ENCODE measurements at regions of chr2 and their contacts with region 1.

Region 1: GRCh38 chr2:64523666-64524603 is at the start of gene AFTPH:
- DNase-seq: peak; percentile 99
- ATAC-seq: peak; percentile 89
- H3K4me3 ChIP-seq: peak within 1 kb of the TSS; percentile 74 to 99 (median 97)
- H3K4me3 Mint-ChIP-seq: peak within 1 kb of the TSS; percentile 98
- H3K27ac ChIP-seq: peak within 1 kb of the TSS; percentile 92 to 97
- H3K27ac Mint-ChIP-seq: peak within 1 kb of the TSS; percentile 100
- H3K4me1 ChIP-seq: peaks cover 34 to 36% of the 10 kb centered on the region in 2 donors
- H3K4me1 Mint-ChIP-seq: peaks cover 45% of the 10 kb centered on the region
- H3K27me3 ChIP-seq: no peaks in the 10 kb centered on the region
- H3K27me3 Mint-ChIP-seq: no peaks in the 10 kb centered on the region
- CTCF ChIP-seq: no peak
- total RNA-seq, gene AFTPH: 91.6 and 94.1 TPM in 2 replicates

Region 2: DNA sequence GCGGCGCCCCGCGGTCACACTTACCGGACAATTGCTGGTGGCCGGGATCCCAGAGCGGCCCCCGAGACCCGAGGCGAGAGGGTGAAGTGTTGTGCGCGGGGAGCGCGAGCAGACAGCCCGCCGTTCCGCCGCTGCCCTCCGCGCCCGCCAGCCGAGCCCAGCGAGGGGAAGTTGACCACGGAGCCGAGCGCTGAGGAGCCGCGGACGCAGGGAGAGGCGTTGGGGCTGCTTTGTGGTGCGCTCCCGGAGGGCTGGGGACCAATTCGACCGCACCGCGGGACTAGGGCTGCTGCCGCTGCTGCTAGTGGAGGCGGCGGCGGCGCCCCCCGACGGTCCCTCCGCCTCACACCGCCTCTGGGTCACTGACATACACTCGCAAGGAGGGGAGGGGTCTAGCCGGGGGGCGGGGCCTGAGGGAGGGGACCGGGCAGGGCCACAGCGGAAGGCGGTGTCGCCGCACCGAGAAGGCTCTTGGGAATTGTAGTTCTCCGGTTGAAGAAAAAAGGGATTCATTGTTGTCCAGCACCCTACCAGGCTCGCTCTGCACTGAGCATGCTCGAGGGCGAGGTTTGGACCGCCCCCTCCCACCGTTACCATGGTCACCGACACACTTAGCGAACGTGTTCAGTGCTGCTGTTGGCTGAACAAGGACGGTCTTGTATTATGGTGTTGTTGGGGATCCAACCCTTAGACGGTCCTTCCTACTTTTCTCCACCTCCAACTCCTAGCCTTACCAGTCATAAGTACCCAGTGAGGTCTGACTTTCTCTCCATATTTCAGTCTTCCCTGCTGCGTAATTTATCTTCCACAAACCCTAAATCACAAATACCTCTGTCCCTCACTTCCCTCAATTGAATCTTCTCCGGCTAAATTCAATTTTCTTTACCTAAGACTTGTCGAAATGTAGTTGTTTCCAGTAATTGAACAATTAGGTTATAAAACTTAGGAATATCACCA is 379.6 kb before region 1 on chr2 and contains the start of gene PELI1:
- CTCF ChIA-PET with region 1: interaction called, 3 read pairs
- POLR2A ChIA-PET with region 1: no interaction called
- intact Hi-C with region 1: loop called (anchors 2 kb)
- DNase-seq: peak; percentile 95
- ATAC-seq: peak; percentile 95
- H3K4me3 ChIP-seq: peak within 1 kb of the TSS; percentile 77 to 98 (median 85)
- H3K4me3 Mint-ChIP-seq: peak within 1 kb of the TSS; percentile 92
- H3K27ac ChIP-seq: peak within 1 kb of the TSS; percentile 81 to 86
- H3K27ac Mint-ChIP-seq: peak within 1 kb of the TSS; percentile 94
- H3K4me1 ChIP-seq: peaks cover 22 to 32% of the 10 kb centered on the region in 2 donors
- H3K4me1 Mint-ChIP-seq: peaks cover 38% of the 10 kb centered on the region
- H3K27me3 ChIP-seq: no peaks in the 10 kb centered on the region
- H3K27me3 Mint-ChIP-seq: no peaks in the 10 kb centered on the region
- CTCF ChIP-seq: peak; percentile 10
- total RNA-seq, gene PELI1: 115 and 117 TPM in 2 replicates

Region 3: GRCh38 chr2:64562148-64562784 is 38.3 kb after region 1 on chr2:
- CTCF ChIA-PET with region 1: interaction called, 217 read pairs
- POLR2A ChIA-PET with region 1: no interaction called
- intact Hi-C with region 1: loop called (anchors 1 kb)
- DNase-seq: peak; percentile 67
- ATAC-seq: peak; percentile 51
- H3K4me3 ChIP-seq: no peak overlapping the region
- H3K4me3 Mint-ChIP-seq: no peak overlapping the region
- H3K27ac ChIP-seq: no peak overlapping the region
- H3K27ac Mint-ChIP-seq: peak overlapping the region; percentile 38
- H3K4me1 ChIP-seq: peaks cover 5 to 7% of the 10 kb centered on the region in 2 donors
- H3K4me1 Mint-ChIP-seq: peaks cover 39% of the 10 kb centered on the region
- H3K27me3 ChIP-seq: no peaks in the 10 kb centered on the region
- H3K27me3 Mint-ChIP-seq: no peaks in the 10 kb centered on the region
- CTCF ChIP-seq: peak; percentile 76

Region 4: GRCh38 chr2:64730551-64731262 is 206.8 kb after region 1 on chr2:
- CTCF ChIA-PET with region 1: interaction called, 3 read pairs
- POLR2A ChIA-PET with region 1: interaction called, 3 read pairs
- intact Hi-C with region 1: loop called (anchors 1 kb)
- DNase-seq: peak; percentile 70
- ATAC-seq: peak; percentile 47
- H3K4me3 ChIP-seq: peak overlapping the region; percentile 43 to 81 (median 61)
- H3K4me3 Mint-ChIP-seq: peak overlapping the region; percentile 87
- H3K27ac ChIP-seq: peak overlapping the region; percentile 84
- H3K27ac Mint-ChIP-seq: peak overlapping the region; percentile 97
- H3K4me1 ChIP-seq: peaks cover 50% of the 10 kb centered on the region in 2 donors
- H3K4me1 Mint-ChIP-seq: peaks cover 57% of the 10 kb centered on the region
- H3K27me3 ChIP-seq: no peaks in the 10 kb centered on the region
- H3K27me3 Mint-ChIP-seq: no peaks in the 10 kb centered on the region
- CTCF ChIP-seq: no peak

Region 5: GRCh38 chr2:64865073-64865830 is 341.3 kb after region 1 on chr2:
- CTCF ChIA-PET with region 1: interaction called, 14 read pairs
- POLR2A ChIA-PET with region 1: no interaction called
- intact Hi-C with region 1: loop called (anchors 1 kb)
- DNase-seq: peak; percentile 86
- ATAC-seq: peak; percentile 54
- H3K4me3 ChIP-seq: peak overlapping the region; percentile 46 to 88 (median 64)
- H3K4me3 Mint-ChIP-seq: no peak overlapping the region
- H3K27ac ChIP-seq: peak overlapping the region; percentile 91 to 93
- H3K27ac Mint-ChIP-seq: peak overlapping the region; percentile 53
- H3K4me1 ChIP-seq: peaks cover 49 to 60% of the 10 kb centered on the region in 2 donors
- H3K4me1 Mint-ChIP-seq: peaks cover 1% of the 10 kb centered on the region
- H3K27me3 ChIP-seq: no peaks in the 10 kb centered on the region
- H3K27me3 Mint-ChIP-seq: no peaks in the 10 kb centered on the region
- CTCF ChIP-seq: peak; percentile 85

Region 6: DNA sequence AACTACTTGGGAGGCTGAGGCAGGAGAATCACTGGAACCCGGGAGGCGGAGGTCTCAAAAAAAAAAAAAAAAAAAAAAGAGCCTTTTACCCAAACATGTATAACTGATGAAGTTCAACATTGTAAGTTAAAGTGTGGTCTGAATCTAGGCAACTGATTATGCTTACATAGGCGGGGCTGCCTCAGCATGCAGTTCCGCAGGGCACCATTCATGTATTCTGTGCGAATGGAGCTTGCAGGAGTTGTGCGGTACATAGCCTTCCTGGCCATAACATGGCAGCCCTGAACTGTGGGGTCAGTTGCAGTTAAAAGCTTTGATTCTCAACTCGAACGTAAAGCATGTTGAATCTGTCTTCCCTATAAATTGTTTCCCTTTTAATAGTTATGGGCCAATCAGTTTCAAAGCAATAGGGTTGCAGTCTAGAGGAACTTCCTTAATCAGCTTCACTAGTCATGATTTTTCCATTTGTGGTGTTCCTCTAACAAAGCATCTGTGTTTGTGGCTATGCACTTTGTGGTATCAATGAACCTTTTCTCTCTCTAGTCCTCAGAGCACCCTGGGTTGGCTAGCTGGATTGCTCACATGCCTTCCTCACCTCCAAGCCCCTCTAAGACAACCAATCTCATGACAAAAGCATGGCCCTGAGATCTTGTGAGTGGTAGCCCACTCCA is 501.7 kb after region 1 on chr2:
- CTCF ChIA-PET with region 1: interaction called, 11 read pairs
- POLR2A ChIA-PET with region 1: no interaction called
- intact Hi-C with region 1: loop called (anchors 2 kb)
- DNase-seq: peak; percentile 66
- ATAC-seq: peak; percentile 31
- H3K4me3 ChIP-seq: peak overlapping the region in 1 of 5 experiments; percentile 24
- H3K4me3 Mint-ChIP-seq: peak overlapping the region; percentile 72
- H3K27ac ChIP-seq: peak overlapping the region; percentile 75 to 86
- H3K27ac Mint-ChIP-seq: peak overlapping the region; percentile 90
- H3K4me1 ChIP-seq: peaks cover 55 to 69% of the 10 kb centered on the region in 2 donors
- H3K4me1 Mint-ChIP-seq: peaks cover 56% of the 10 kb centered on the region
- H3K27me3 ChIP-seq: no peaks in the 10 kb centered on the region
- H3K27me3 Mint-ChIP-seq: no peaks in the 10 kb centered on the region
- CTCF ChIP-seq: no peak

Region 7: DNA sequence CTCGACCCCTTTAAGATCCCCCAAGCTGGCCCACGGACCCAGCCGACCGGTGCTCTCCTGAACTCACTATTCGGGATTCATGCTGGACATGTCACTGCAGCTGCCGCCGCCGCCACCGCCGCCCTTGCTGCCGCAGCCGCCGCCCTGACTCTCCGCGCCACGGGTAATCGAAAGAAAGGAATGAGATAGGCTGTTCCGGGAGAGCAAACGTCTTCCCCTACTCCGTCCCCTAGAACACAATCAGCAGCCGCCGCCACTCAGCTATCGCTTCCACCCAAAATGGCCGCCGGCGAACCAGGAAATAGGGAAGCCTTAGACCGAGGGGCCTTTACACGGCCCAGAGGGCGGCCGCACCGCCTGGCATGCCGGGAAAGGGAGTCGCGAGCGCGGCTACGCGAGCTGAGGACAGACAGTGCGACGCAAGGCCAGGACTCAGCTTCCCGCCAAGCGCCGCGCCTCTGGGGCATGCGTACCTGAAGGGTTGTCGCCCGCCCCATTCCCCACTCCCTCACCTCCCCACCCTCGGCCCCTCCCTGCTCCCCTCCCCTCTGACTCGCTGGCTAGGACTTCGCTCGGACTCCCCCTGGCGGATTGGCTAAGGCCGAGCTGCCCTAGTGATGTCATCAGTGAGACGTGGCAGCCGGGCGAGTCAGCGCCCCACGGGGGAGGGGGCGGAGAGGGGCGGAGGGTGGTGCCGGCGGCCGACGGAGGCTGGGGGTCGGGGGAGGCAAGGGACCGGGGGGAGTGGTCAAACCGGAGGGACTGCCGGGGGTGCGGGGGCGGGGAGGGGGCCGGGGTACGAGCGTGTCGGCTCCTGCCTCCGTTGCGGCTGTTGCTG is 606.1 kb after region 1 on chr2 and contains the start of gene RAB1A:
- CTCF ChIA-PET with region 1: interaction called, 3 read pairs
- POLR2A ChIA-PET with region 1: interaction called, 3 read pairs
- intact Hi-C with region 1: loop called (anchors 1 kb)
- DNase-seq: peak; percentile 99
- ATAC-seq: peak; percentile 88
- H3K4me3 ChIP-seq: peak within 1 kb of the TSS; percentile 96 to 97 (median 97)
- H3K4me3 Mint-ChIP-seq: peak within 1 kb of the TSS; percentile 100
- H3K27ac ChIP-seq: peak within 1 kb of the TSS; percentile 94 to 98
- H3K27ac Mint-ChIP-seq: peak within 1 kb of the TSS; percentile 100
- H3K4me1 ChIP-seq: peaks cover 23 to 25% of the 10 kb centered on the region in 2 donors
- H3K4me1 Mint-ChIP-seq: peaks cover 38% of the 10 kb centered on the region
- H3K27me3 ChIP-seq: no peaks in the 10 kb centered on the region
- H3K27me3 Mint-ChIP-seq: no peaks in the 10 kb centered on the region
- CTCF ChIP-seq: no peak
- total RNA-seq, gene RAB1A: 42.2 and 43.7 TPM in 2 replicates

Region 8: DNA sequence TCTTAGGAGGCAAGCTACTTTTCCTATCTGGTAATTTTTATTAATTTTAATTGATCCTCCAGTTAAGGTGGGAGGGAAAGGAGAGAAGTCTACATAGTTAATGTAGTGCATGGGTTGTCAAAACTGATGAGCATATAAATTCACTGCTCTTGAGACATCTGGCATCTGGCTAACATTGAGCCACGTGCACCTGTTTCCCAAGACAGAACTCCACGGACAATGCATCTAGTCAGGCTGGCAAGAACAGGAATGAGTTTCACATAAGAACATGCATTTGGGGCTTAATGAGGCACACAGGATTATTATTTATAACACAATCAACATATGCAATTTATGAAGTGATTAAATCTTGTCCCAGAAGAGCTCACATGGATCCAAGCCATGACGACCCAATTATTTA is 622.1 kb after region 1 on chr2:
- CTCF ChIA-PET with region 1: no interaction called
- POLR2A ChIA-PET with region 1: no interaction called
- intact Hi-C with region 1: no loop called
- DNase-seq: no peak
- ATAC-seq: no peak
- H3K4me3 ChIP-seq: no peak overlapping the region
- H3K4me3 Mint-ChIP-seq: no peak overlapping the region
- H3K27ac ChIP-seq: no peak overlapping the region
- H3K27ac Mint-ChIP-seq: no peak overlapping the region
- H3K4me1 ChIP-seq: no peaks in the 10 kb centered on the region
- H3K4me1 Mint-ChIP-seq: no peaks in the 10 kb centered on the region
- H3K27me3 ChIP-seq: no peaks in the 10 kb centered on the region
- H3K27me3 Mint-ChIP-seq: peaks cover 14% of the 10 kb centered on the region
- CTCF ChIP-seq: no peak

Measured in B cell (primary cell).